Psoas muscle (tissue), 8 donors: ENCODE measurements at regions of chr2 and their contacts with region 1.

Region 1: DNA sequence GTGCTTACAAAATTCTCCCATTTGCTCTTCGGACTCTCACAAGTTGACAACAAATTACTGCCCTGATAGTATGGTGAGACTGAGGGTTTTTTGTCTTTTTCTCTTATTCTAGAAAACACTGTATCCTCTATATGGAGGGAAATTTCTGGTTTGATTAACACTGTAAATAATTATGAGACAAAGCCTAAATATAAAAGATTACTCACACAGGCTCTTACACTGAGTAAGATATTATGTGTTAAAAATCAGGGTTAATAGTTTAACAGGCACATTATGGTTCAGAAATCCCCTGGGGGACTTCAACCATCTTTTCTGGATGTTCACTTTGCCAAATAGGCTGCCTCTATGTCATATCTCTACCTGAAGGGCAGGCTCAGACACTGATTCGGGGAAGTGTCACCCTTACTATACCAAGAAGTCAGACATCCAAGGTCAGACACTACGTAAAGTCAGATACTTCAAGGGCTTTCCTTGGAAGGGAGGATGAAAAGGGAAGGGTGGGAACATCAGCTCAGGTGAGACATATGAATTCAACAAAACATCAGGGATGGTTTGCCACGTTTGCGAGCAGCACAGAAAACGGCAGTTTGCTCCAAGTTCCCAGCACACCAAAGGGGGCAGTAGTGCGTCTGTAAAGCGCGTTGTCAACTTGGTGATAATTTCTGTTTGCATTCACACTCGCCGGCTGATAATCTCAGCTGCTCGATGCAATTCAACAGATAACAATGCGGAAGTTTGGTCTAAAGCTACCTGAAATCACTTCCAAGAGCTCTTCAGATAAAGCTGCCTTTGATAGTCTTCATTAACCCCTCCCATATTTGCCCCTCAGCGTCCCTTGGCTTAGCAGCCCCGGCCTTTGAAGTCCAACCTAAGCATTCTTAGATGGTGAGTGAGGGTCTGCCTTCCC is 972 bp upstream of the RASGRP3 start:
- DNase-seq: peak; percentile 69 to 80
- ATAC-seq: peak; percentile 66 to 80 (median 70)
- H3K4me3 ChIP-seq: peak overlapping the region; percentile 78
- H3K27ac ChIP-seq: peak overlapping the region; percentile 96
- H3K4me1 ChIP-seq: peaks cover 47% of the 10 kb centered on the region
- H3K27me3 ChIP-seq: no peaks in the 10 kb centered on the region
- CTCF ChIP-seq: peak; percentile 74

Region 2: GRCh38 chr2:33577668-33578067 is 102.2 kb after region 1 on chr2:
- intact Hi-C with region 1: loop called (anchors 5 kb)
- DNase-seq: no peak
- ATAC-seq: no peak
- H3K4me3 ChIP-seq: no peak overlapping the region
- H3K27ac ChIP-seq: no peak overlapping the region
- H3K4me1 ChIP-seq: no peaks in the 10 kb centered on the region
- H3K27me3 ChIP-seq: no peaks in the 10 kb centered on the region
- CTCF ChIP-seq: no peak